Ovary (tissue), 10 donors: ENCODE measurements at regions of chr17 and their contacts with region 1.

Region 1: GRCh38 chr17:82051776-82052637 is at the starts of genes GPS1 and RFNG:
- DNase-seq: peak; percentile 71 to 85 (median 79)
- H3K4me3 ChIP-seq: peak within 1 kb of the TSS; percentile 59
- H3K27ac ChIP-seq: peak within 1 kb of the TSS; percentile 36 to 75
- H3K4me1 ChIP-seq: peaks cover 9% of the 10 kb centered on the region
- H3K27me3 ChIP-seq: no peaks in the 10 kb centered on the region
- CTCF ChIP-seq: no peak
- EP300 ChIP-seq: no peak
- POLR2A ChIP-seq: no peak
- total RNA-seq, gene GPS1: 48.8 to 96.2 (median 80.1) TPM
- total RNA-seq, gene RFNG: 33.3 to 53.0 (median 44.7) TPM

Region 2: GRCh38 chr17:81991684-81992305 is 60.2 kb before region 1 on chr17:
- intact Hi-C with region 1: loop called in 1 of 4 experiments (anchors 10 kb)
- DNase-seq: no peak
- H3K4me3 ChIP-seq: no peak overlapping the region
- H3K27ac ChIP-seq: no peak overlapping the region
- H3K4me1 ChIP-seq: no peaks in the 10 kb centered on the region
- H3K27me3 ChIP-seq: no peaks in the 10 kb centered on the region
- CTCF ChIP-seq: no peak
- EP300 ChIP-seq: no peak
- POLR2A ChIP-seq: no peak

Region 3: DNA sequence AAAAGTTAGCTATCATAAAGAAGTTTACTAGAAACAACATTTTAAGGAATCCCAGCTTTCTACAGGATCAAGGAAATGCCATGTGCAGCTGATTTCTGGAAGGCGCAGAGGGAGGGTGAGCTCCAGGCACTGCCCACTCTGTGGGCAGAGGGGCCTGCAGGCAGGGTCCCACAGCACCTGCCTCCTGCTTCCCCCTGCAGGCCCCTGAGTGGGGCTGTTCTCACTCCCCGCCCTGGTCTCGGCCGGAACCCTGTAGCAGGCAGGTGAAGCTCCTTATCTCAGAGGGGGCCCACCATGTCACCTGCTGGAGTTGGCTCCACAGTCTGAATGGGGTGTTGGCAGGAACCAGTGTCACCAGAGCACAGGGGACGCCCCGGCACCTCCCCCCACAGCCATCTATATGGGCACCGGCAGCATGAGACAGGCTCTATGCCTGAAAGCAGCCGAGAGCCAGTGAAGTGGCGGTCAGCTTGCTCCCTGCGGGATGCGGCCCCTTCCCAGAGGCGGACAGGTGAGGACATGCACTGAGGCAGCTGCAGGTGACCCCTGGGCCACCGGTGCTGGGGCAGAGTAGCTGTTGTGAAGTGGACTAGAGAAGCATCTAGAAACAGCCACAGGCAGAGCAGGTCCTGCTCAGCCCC is 93.7 kb after region 1 on chr17:
- intact Hi-C with region 1: no loop called
- DNase-seq: no peak
- H3K4me3 ChIP-seq: no peak overlapping the region
- H3K27ac ChIP-seq: no peak overlapping the region
- H3K4me1 ChIP-seq: peaks cover 1% of the 10 kb centered on the region
- H3K27me3 ChIP-seq: no peaks in the 10 kb centered on the region
- CTCF ChIP-seq: no peak
- EP300 ChIP-seq: no peak
- POLR2A ChIP-seq: no peak

Region 4: GRCh38 chr17:82358465-82359350 is 306.7 kb after region 1 on chr17 and contains the start of gene TEX19:
- intact Hi-C with region 1: no loop called
- DNase-seq: no peak
- H3K4me3 ChIP-seq: no peak within 1 kb of the TSS
- H3K27ac ChIP-seq: no peak within 1 kb of the TSS
- H3K4me1 ChIP-seq: no peaks in the 10 kb centered on the region
- H3K27me3 ChIP-seq: no peaks in the 10 kb centered on the region
- CTCF ChIP-seq: no peak
- EP300 ChIP-seq: no peak
- POLR2A ChIP-seq: no peak
- total RNA-seq, gene TEX19: not detected